ENCODE measurements at regions of chr18 and their contacts with region 1.

Region 1: DNA sequence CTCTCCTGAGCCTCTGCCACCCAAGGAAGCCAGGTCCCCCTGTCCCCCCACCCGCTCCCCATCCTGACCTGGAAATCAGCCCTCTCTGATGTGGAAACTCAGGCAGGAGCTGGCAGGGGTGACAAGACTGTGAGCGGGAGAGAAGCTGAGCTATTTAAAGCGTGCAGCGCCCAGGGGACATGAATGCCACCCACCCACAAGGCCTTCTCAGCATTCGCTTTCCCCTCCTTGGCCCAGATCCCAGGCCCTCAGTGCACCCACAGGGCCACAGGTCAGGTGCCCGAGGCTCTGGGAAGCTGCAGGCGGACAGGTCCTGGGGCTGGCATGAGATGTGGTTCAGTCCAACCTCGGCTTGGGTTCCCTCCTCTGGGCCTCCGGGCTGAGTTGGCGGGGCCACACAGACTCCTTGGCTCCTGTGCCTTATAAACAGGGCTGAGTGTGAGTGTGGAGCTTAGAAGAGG is 168.4 kb downstream of the SMAD7 start:
- DNase-seq: peak; percentile 53 to 87
- H3K4me3 ChIP-seq: peak overlapping the region in 1 of 2 donors; percentile 26
- H3K27ac ChIP-seq: peak overlapping the region; percentile 94 to 95
- H3K4me1 ChIP-seq: peaks cover 39 to 81% of the 10 kb centered on the region in 2 donors
- H3K27me3 ChIP-seq: no peaks in the 10 kb centered on the region
- CTCF ChIP-seq: no peak

Region 2: GRCh38 chr18:48806551-48807261 is 24.3 kb after region 1 on chr18:
- intact Hi-C with region 1: loop called (anchors 2 kb)
- DNase-seq: peak in 1 of 2 donors; percentile 87
- H3K4me3 ChIP-seq: no peak overlapping the region
- H3K27ac ChIP-seq: peak overlapping the region; percentile 86 to 88
- H3K4me1 ChIP-seq: peaks cover 20 to 62% of the 10 kb centered on the region in 2 donors
- H3K27me3 ChIP-seq: no peaks in the 10 kb centered on the region
- CTCF ChIP-seq: no peak

Region 3: DNA sequence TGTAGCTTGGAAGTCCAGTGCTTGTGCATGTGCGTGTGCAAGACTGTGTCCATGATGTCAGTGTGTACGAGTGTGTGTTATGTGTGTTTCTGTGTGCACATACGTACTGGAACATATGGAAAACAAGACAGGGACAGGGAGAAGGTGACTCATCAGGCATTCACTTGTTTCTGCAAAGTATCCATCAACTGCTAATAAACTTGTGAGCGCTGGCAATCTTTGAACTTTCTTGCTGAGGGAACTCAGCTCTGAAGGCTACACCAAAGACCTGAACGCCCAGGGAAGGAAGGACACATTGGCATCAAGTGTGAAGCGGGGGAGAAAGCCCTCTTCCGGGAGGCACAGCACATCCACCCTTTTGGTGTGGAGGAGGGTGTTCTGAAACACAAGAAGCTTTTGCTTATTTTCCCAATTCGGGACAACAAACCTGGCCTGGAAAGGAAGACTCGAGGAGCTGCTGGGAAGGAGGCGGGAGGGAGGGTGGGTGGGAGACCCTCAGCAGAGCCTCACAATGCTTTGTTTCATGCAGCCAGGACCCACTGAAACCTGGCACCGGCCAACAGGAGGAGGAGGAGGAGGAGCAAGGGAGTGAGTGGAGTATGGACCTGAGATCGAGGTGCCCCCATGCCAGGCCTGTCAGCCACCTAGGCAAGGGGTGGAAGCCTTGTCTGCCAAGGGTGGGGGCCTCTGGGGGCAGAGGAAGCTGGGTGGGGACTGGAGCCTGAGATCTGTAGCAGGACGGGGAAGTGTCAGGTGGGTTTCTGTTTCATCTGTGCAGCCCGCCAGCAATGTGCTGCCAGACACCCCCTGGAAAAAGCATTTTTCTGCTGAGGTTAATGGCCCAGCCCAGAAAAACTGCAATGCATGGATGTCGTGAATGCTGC is 141.6 kb after region 1 on chr18:
- intact Hi-C with region 1: no loop called
- DNase-seq: no peak
- H3K4me3 ChIP-seq: peak overlapping the region; percentile 52 to 55
- H3K27ac ChIP-seq: peak overlapping the region; percentile 97 to 99
- H3K4me1 ChIP-seq: peaks cover 43 to 90% of the 10 kb centered on the region in 2 donors
- H3K27me3 ChIP-seq: no peaks in the 10 kb centered on the region
- CTCF ChIP-seq: no peak

Measured in ascending aorta (tissue), 2 donors.